ENCODE measurements at regions of chr7 and their contacts with region 1.

Region 1: DNA sequence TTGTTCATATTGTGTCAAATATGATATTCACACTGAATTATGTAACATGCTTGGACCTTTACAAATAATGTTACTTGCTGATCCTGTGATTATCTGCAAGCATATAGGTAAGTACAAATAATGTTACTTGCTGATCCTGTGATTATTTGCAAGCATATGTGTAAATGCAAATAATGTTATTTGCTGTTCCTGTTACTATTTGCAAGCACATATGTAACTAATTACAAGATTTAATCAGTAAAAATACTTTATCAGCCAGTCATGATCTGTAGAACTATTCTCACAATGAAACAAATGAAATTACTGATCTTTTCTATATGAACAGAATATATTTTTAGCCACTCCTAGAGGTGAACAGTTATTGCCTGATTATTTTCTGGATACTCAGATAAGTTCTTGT is 44.7 kb upstream of the NPY start:
- DNase-seq: no peak
- ATAC-seq: no peak
- H3K4me3 ChIP-seq: no peak overlapping the region
- H3K27ac ChIP-seq: no peak overlapping the region
- H3K4me1 ChIP-seq: no peaks in the 10 kb centered on the region
- H3K27me3 ChIP-seq: peaks cover 10% of the 10 kb centered on the region; the same call in 1 of the 2 replicates
- CTCF ChIP-seq: no peak

Region 2: GRCh38 chr7:23767514-23767913 is 471.7 kb before region 1 on chr7:
- CTCF ChIA-PET with region 1: interaction called, 15 read pairs
- POLR2A ChIA-PET with region 1: no interaction called
- in situ Hi-C with region 1: no loop called
- intact Hi-C with region 1: no loop called
- DNase-seq: no peak
- ATAC-seq: peak; percentile 56; the same call in 1 of the 2 replicates
- H3K4me3 ChIP-seq: no peak overlapping the region
- H3K27ac ChIP-seq: peak overlapping the region; percentile 36; the same call in 1 of the 2 replicates
- H3K4me1 ChIP-seq: peaks cover 2% of the 10 kb centered on the region; the same call in 1 of the 2 replicates
- H3K27me3 ChIP-seq: no peaks in the 10 kb centered on the region
- CTCF ChIP-seq: peak; percentile 25; the same call in 1 of the 2 replicates

Region 3: GRCh38 chr7:24192053-24192452 is 47.2 kb before region 1 on chr7:
- CTCF ChIA-PET with region 1: no interaction called
- POLR2A ChIA-PET with region 1: no interaction called
- in situ Hi-C with region 1: no loop called
- intact Hi-C with region 1: no loop called
- DNase-seq: no peak
- ATAC-seq: no peak
- H3K4me3 ChIP-seq: no peak overlapping the region
- H3K27ac ChIP-seq: no peak overlapping the region
- H3K4me1 ChIP-seq: no peaks in the 10 kb centered on the region
- H3K27me3 ChIP-seq: peaks cover 2% of the 10 kb centered on the region; the same call in 1 of the 2 replicates
- CTCF ChIP-seq: no peak

Measured in Panc1 (cell line).